Activated CD8-positive, alpha-beta T cell treated with anti-CD3 and anti-CD28 coated beads, Interleukin-2, amount 10 ng/mL, durations not matched to agents 7 days and 5 days (primary cell): ENCODE measurements at regions of chr1 and their contacts with region 1.

Region 1: DNA sequence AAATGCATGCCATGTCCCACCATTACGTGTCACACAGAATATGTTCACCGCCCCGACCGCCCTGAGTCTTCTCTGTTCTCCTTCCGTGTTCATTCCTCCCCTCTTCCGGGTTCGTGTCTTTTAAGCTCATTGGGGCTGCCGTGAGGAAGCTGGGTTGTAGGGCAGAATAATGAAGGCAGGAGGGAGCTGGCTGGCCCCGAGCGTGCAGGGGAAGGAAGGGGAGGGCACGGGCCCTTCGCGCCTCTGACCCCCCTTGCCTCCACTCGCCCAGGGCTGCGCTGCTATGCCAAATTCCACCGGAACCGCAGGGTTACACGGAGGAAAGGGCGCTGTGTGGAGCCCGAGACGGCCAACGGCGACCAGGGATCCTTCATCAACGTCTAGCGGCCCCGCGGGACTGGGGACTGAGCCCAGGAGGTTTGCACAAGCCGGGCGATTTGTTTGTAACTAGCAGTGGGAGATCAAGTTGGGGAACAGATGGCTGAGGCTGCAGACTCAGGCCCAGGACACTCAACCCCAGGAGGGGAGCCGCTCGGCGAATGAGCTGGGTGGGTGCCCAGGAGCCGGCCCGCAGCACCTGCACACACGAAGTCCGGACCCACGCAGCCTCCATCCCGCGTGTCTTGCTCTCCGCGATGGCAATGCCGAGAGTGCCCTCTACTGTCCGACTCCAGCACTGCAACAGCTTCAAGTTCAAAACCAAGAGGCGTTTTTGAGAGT is 16.5 kb upstream of the AGTRAP start:
- DNase-seq: peak; percentile 91
- ATAC-seq: peak; percentile 95
- H3K4me3 Mint-ChIP-seq: peak overlapping the region; percentile 66
- H3K27ac Mint-ChIP-seq: peak overlapping the region; percentile 96
- H3K4me1 Mint-ChIP-seq: peaks cover 30% of the 10 kb centered on the region
- H3K27me3 Mint-ChIP-seq: no peaks in the 10 kb centered on the region

Region 2: DNA sequence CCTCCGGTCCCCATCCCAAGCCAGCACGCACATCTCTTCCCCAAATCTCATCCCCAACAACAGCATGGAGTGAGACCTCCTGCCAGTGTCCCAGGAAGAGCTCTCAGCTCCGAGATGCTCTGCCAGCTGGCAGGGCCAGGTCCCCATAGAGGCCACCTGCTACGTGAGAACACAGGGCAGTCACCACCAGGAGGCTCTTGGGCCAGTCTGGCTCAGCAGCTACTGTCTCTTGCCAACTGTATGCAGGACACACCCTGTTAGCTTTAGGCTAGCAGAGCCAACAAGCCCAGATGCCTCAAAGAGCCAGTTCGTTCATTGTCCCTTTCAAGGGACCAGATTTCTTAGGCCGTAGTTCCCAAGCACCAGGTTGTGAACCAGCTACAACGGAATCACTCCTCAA is 102.2 kb before region 1 on chr1:
- CTCF ChIA-PET with region 1: no interaction called
- POLR2A ChIA-PET with region 1: no interaction called
- DNase-seq: no peak
- ATAC-seq: no peak
- H3K4me3 Mint-ChIP-seq: no peak overlapping the region
- H3K27ac Mint-ChIP-seq: no peak overlapping the region
- H3K4me1 Mint-ChIP-seq: no peaks in the 10 kb centered on the region
- H3K27me3 Mint-ChIP-seq: no peaks in the 10 kb centered on the region

Region 3: DNA sequence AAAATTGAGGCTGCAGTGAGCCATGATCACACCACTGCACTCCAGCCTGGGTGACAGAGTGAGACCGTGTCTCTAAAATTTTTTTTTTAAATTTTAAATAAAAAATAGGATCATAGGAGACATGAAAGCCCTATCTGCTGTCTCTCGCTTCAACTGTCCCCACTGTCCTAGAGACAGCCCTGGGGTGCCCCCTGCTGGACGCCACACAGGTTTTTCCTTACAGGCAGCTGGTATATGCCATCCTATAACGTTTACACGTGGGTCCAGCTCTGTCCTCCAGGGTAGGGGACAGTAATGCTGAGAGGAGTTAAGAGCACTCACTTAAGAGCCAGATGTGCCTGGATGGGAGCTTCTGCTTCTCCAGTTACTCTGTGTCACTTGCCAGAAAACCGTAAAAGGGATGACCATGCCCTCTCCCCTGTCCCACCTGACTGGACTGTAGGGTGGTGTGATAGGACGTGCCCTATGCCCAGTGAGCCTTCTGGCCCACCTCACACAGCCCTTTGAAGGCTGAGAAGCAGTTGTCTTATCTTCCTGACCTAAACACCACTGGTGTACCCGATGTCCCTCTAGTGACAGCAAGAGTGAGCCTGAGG is 73.7 kb before region 1 on chr1:
- CTCF ChIA-PET with region 1: interaction called, 55 read pairs
- POLR2A ChIA-PET with region 1: interaction called, 14 read pairs
- DNase-seq: peak; percentile 91
- ATAC-seq: peak; percentile 55
- H3K4me3 Mint-ChIP-seq: no peak overlapping the region
- H3K27ac Mint-ChIP-seq: no peak overlapping the region
- H3K4me1 Mint-ChIP-seq: peaks cover 16% of the 10 kb centered on the region
- H3K27me3 Mint-ChIP-seq: peaks cover 2% of the 10 kb centered on the region

Region 4: DNA sequence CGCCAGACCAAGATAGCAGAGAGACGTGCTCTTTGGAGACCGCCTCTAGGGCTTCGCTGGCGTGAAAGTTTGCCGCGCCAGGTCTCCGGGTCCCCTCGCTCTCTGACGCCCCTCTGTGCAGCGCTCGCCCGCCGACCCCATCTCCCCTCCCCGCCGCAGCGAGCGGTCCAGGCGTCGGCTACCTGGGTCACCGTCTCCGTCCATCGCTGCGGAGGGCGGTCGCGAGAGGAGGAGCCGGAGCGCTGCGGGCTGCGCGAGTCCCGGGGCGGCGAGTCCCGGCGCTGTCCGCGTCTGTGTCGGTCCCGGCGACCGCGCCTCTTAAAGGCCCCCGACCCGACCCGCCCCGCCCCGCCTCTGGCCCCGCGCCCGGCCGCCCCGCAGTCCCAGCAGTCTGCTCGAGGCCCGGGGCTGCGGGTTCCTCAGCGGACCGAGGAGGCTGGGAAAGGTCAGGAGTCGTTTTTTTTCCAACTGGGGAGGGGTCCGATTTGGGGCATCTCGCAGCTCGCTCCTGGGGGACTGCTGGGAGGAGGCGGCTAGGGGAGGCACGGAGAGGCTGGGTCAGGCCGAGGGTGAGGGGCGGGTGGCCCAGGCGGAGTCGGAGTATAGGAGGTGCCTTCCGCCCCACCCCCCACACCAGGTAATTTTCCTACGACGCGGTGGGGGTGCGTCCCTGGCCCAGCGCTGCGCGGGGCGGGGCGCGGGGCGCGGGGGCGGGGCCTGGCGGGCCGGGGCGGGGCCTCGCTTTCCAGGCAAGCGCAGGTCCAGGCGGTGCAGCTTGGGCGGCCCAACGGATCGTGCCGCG is 65.1 kb before region 1 on chr1 and contains the starts of genes FBXO2 and FBXO44:
- CTCF ChIA-PET with region 1: interaction called, 55 read pairs
- POLR2A ChIA-PET with region 1: interaction called, 14 read pairs
- DNase-seq: peak; percentile 71
- ATAC-seq: peak; percentile 80
- H3K4me3 Mint-ChIP-seq: peak within 1 kb of the TSS; percentile 74
- H3K27ac Mint-ChIP-seq: no peak within 1 kb of the TSS
- H3K4me1 Mint-ChIP-seq: peaks cover 40% of the 10 kb centered on the region
- H3K27me3 Mint-ChIP-seq: peaks cover 2% of the 10 kb centered on the region
- total RNA-seq, gene FBXO2: 5.6 to 6.0 TPM
- total RNA-seq, gene FBXO44: 39.7 to 42.3 TPM

Region 5: DNA sequence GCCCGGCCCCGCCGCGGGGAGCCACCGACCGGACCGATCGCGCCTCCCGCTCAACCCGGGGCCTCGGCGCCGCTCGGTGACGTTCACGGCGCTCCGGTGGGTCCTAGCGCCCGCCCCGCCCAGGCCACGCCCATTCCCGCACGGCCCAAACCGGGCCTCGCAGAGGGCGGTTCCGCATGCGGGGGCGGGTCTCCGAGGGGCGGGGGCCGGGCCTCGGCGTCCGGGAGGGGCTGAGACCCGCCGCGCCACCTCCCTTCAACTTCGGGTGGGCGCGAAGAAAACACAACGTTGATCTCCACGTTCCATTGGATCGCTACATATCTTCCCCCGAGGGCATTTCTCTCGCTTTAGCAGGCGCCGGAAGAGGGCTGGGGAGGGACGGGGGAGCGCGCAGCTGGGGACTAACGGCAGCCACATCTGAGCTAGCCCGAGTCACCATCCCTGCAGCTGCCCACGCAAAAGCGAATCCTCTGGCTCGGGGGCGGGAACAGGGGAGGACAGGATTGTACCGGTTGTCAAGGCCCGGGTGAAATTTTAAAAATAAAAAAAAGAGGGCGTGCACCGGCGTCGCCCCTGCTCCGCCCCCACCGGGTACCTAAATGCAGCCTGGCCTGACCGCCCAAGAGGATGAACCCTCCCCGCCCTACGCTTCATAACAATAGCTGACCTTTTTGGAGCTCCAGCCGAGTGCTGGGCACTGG is 38.3 kb before region 1 on chr1 and contains the start of gene MAD2L2:
- CTCF ChIA-PET with region 1: interaction called, 19 read pairs
- POLR2A ChIA-PET with region 1: interaction called, 5 read pairs
- DNase-seq: peak; percentile 94
- ATAC-seq: peak; percentile 94
- H3K4me3 Mint-ChIP-seq: peak within 1 kb of the TSS; percentile 88
- H3K27ac Mint-ChIP-seq: peak within 1 kb of the TSS; percentile 97
- H3K4me1 Mint-ChIP-seq: peaks cover 25% of the 10 kb centered on the region
- H3K27me3 Mint-ChIP-seq: peaks cover 15% of the 10 kb centered on the region
- total RNA-seq, gene MAD2L2: 127 to 129 TPM

Region 6: DNA sequence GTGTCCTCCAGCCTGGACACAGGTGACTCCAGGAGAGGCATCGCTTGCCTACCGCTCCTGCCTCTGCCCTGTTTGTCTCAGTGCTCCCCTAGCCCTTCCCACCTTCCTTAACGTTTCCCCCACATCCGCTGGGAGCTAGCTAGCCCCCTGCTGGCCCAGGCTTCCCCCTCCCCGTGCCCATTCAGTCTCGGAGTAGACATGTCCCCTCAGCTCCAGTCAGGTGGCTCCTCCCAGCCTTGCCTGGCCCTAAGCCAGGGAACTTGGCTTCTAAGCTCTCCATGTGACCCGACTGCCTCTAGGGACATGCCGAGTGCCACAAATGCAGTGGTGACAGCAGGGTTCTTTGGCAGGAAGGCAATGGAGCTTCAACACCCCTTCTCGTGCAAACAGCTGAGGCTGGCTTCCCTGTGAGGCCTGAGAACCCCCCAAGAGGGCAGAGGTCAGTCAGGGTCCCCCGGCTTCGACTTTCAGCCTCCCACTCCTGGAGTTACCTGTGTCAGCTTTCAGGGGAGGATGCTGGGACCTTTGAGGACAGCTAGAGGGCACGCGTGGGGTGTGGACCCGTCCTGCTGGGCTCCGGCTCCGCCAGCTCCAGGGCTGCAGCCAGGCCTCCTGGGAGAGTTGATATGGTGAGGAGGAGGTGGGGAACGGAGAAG is 11.7 kb before region 1 on chr1:
- CTCF ChIA-PET with region 1: interaction called, 32 read pairs
- POLR2A ChIA-PET with region 1: interaction called, 6 read pairs
- DNase-seq: no peak
- ATAC-seq: no peak
- H3K4me3 Mint-ChIP-seq: no peak overlapping the region
- H3K27ac Mint-ChIP-seq: no peak overlapping the region
- H3K4me1 Mint-ChIP-seq: peaks cover 16% of the 10 kb centered on the region
- H3K27me3 Mint-ChIP-seq: peaks cover 17% of the 10 kb centered on the region

Region 7: DNA sequence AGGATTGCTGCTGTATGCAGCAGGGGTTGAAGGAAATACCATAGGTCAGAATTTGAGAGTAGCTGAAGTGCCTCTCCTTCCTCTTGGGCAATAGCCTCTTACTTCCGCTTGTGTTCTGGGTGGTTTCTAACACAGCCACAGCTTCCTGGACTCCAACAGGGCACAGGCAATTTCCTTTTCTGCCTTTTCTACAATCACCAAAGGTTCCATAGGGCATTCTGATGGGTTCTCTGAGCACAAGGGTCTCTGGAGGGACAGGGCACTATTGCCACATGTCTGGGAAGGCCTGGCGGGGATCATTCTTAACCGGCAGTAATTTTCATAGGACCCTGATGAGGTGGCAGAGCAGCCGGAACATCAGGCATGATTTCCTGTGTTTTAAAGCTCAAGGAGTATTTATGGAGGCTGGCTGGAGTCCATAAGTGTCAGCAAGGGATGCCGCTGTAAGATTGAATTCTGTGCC is 11.0 kb after region 1 on chr1:
- CTCF ChIA-PET with region 1: interaction called, 36 read pairs
- POLR2A ChIA-PET with region 1: interaction called, 10 read pairs
- DNase-seq: peak; percentile 81
- ATAC-seq: peak; percentile 82
- H3K4me3 Mint-ChIP-seq: peak overlapping the region; percentile 61
- H3K27ac Mint-ChIP-seq: peak overlapping the region; percentile 79
- H3K4me1 Mint-ChIP-seq: peaks cover 60% of the 10 kb centered on the region
- H3K27me3 Mint-ChIP-seq: no peaks in the 10 kb centered on the region

Region 8: GRCh38 chr1:11735854-11736745 is 16.6 kb after region 1 on chr1 and contains the start of gene AGTRAP:
- CTCF ChIA-PET with region 1: interaction called, 36 read pairs
- POLR2A ChIA-PET with region 1: interaction called, 10 read pairs
- DNase-seq: peak; percentile 94
- ATAC-seq: peak; percentile 81
- H3K4me3 Mint-ChIP-seq: peak within 1 kb of the TSS; percentile 98
- H3K27ac Mint-ChIP-seq: peak within 1 kb of the TSS; percentile 91
- H3K4me1 Mint-ChIP-seq: peaks cover 74% of the 10 kb centered on the region
- H3K27me3 Mint-ChIP-seq: no peaks in the 10 kb centered on the region
- total RNA-seq, gene AGTRAP: 82.5 to 84.2 TPM